ENCODE measurements at regions of chr20 and their contacts with region 1.

Region 1: GRCh38 chr20:49278036-49278817 is at the start of gene ZNFX1:
- DNase-seq: peak; percentile 94 to 99 (median 97)
- ATAC-seq: peak; percentile 92
- H3K4me3 ChIP-seq: peak within 1 kb of the TSS; percentile 80
- H3K4me3 Mint-ChIP-seq: peak within 1 kb of the TSS; percentile 91 to 100 (median 97)
- H3K27ac ChIP-seq: peak within 1 kb of the TSS; percentile 95
- H3K27ac Mint-ChIP-seq: peak within 1 kb of the TSS; percentile 90 to 99 (median 97)
- H3K4me1 ChIP-seq: peaks cover 37 to 61% of the 10 kb centered on the region in 2 donors
- H3K4me1 Mint-ChIP-seq: peaks cover 52 to 80% (median 67%) of the 10 kb centered on the region in 7 donors
- H3K27me3 ChIP-seq: no peaks in the 10 kb centered on the region
- H3K27me3 Mint-ChIP-seq: peaks cover 0 to 4% (median 0%) of the 10 kb centered on the region in 5 donors
- total RNA-seq, gene ZNFX1: 45.0 to 83.7 (median 62.2) TPM

Region 2: DNA sequence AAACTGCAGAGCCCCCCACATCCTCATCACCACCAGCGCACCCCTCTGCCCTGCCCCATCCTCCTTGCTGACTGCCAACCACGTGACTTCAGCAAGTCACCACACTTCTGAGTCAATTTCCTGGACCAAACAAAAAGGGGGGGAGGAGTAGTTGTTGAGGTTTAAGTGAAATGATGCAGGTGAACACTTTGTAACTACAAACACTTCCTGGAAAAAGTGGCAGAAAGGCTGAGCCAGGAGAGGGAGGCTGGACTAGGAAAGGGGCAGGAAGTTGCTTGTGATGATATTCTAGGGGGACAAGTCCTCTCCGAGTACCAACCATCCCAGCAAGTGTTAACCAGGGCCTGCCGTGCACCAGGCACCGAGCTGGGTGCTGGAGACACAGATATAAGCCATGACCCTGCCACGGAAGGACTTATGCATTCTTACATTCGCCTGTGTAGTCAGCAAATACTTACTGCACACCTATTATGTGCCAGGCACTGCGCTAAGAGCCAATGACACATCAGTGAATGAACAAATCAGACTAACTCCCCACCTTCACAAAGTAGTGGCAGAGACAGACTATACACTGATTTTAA is 517.7 kb before region 1 on chr20:
- CTCF ChIA-PET with region 1: no interaction called
- POLR2A ChIA-PET with region 1: no interaction called
- intact Hi-C with region 1: loop called in 1 of 2 experiments (anchors 10 kb)
- DNase-seq: peak in 8 of 9 donors; percentile 21 to 74 (median 62)
- ATAC-seq: peak; percentile 85
- H3K4me3 ChIP-seq: peak overlapping the region; percentile 48
- H3K4me3 Mint-ChIP-seq: peak overlapping the region in 9 of 10 donors; percentile 54 to 81 (median 70)
- H3K27ac ChIP-seq: peak overlapping the region; percentile 57
- H3K27ac Mint-ChIP-seq: peak overlapping the region; percentile 85 to 95 (median 93)
- H3K4me1 ChIP-seq: peaks cover 45 to 72% of the 10 kb centered on the region in 2 donors
- H3K4me1 Mint-ChIP-seq: peaks cover 38 to 86% (median 58%) of the 10 kb centered on the region in 7 donors
- H3K27me3 ChIP-seq: no peaks in the 10 kb centered on the region
- H3K27me3 Mint-ChIP-seq: no peaks in the 10 kb centered on the region

Region 3: DNA sequence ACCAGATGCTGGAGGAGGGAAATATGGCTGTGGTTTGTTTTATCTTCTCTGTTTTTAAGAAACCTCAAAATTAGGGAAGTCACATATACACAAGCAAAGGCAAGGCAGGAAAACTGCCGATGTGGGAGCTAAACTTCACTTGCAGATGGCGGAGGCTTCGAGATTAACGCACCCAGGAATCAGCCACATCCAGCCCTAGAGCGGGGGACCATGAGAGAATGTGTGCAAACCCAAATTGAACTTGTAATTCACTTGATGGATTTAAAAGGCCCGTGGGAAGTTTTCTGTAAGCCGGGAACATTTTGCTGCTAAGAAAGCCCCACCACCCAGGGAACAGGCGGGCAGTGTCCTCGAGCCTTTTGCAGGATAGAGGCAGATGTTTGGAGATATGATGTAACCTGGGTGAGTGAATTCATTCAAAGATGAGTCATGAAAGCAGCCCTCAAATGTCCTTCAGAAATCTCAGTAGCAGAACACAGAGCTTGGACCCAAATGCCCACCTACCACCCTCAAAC is 490.3 kb before region 1 on chr20:
- CTCF ChIA-PET with region 1: no interaction called
- POLR2A ChIA-PET with region 1: no interaction called
- intact Hi-C with region 1: no loop called
- DNase-seq: no peak
- ATAC-seq: peak; percentile 55
- H3K4me3 ChIP-seq: no peak overlapping the region
- H3K4me3 Mint-ChIP-seq: peak overlapping the region in 1 of 10 donors; percentile 16
- H3K27ac ChIP-seq: no peak overlapping the region
- H3K27ac Mint-ChIP-seq: peak overlapping the region in 4 of 9 donors; percentile 20 to 75 (median 38)
- H3K4me1 ChIP-seq: peaks cover 16 to 65% of the 10 kb centered on the region in 2 donors
- H3K4me1 Mint-ChIP-seq: peaks cover 16 to 64% (median 41%) of the 10 kb centered on the region in 7 donors
- H3K27me3 ChIP-seq: no peaks in the 10 kb centered on the region
- H3K27me3 Mint-ChIP-seq: no peaks in the 10 kb centered on the region

Region 4: DNA sequence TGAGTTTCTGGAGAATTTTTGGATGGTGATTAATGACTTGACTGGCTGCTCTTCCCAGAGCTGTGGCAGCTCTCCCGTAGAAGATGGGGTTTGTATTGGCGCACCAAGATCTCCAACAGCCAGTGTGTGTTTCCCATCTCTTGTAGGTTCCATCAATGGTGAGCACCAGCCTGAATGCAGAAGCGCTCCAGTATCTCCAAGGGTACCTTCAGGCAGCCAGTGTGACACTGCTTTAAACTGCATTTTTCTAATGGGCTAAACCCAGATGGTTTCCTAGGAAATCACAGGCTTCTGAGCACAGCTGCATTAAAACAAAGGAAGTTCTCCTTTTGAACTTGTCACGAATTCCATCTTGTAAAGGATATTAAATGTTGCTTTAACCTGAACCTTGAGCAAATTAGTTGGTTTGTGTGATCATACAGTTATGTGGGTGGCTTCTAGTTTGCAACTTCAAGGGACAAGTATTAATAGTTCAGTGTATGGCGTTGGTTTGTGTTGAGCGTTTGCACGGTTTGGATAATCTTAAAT is 182.0 kb before region 1 on chr20:
- CTCF ChIA-PET with region 1: no interaction called
- POLR2A ChIA-PET with region 1: no interaction called
- intact Hi-C with region 1: no loop called
- DNase-seq: no peak
- ATAC-seq: no peak
- H3K4me3 ChIP-seq: no peak overlapping the region
- H3K4me3 Mint-ChIP-seq: no peak overlapping the region
- H3K27ac ChIP-seq: no peak overlapping the region
- H3K27ac Mint-ChIP-seq: peak overlapping the region in 2 of 9 donors; percentile 13 to 37
- H3K4me1 ChIP-seq: no peaks in the 10 kb centered on the region
- H3K4me1 Mint-ChIP-seq: peaks cover 0 to 14% (median 8%) of the 10 kb centered on the region in 7 donors
- H3K27me3 ChIP-seq: no peaks in the 10 kb centered on the region
- H3K27me3 Mint-ChIP-seq: no peaks in the 10 kb centered on the region

Region 5: GRCh38 chr20:49186535-49187329 is 91.5 kb before region 1 on chr20:
- CTCF ChIA-PET with region 1: no interaction called
- POLR2A ChIA-PET with region 1: interaction called, 6 read pairs
- intact Hi-C with region 1: loop called (anchors 1 kb)
- DNase-seq: peak; percentile 17 to 85 (median 73)
- ATAC-seq: peak; percentile 33
- H3K4me3 ChIP-seq: peak overlapping the region; percentile 88
- H3K4me3 Mint-ChIP-seq: peak overlapping the region; percentile 88 to 100 (median 94)
- H3K27ac ChIP-seq: peak overlapping the region; percentile 97
- H3K27ac Mint-ChIP-seq: peak overlapping the region; percentile 70 to 96 (median 93)
- H3K4me1 ChIP-seq: peaks cover 18% of the 10 kb centered on the region in 2 donors
- H3K4me1 Mint-ChIP-seq: peaks cover 38 to 56% (median 50%) of the 10 kb centered on the region in 7 donors
- H3K27me3 ChIP-seq: no peaks in the 10 kb centered on the region
- H3K27me3 Mint-ChIP-seq: peaks cover 0 to 7% (median 0%) of the 10 kb centered on the region in 5 donors

Region 6: GRCh38 chr20:49323622-49324238 is 45.5 kb after region 1 on chr20:
- CTCF ChIA-PET with region 1: no interaction called
- POLR2A ChIA-PET with region 1: interaction called, 3 read pairs
- intact Hi-C with region 1: loop called (anchors 2 kb)
- DNase-seq: peak in 8 of 9 donors; percentile 22 to 51 (median 34)
- ATAC-seq: peak; percentile 88
- H3K4me3 ChIP-seq: no peak overlapping the region
- H3K4me3 Mint-ChIP-seq: peak overlapping the region in 2 of 10 donors; percentile 32 to 47
- H3K27ac ChIP-seq: no peak overlapping the region
- H3K27ac Mint-ChIP-seq: peak overlapping the region in 1 of 9 donors; percentile 59
- H3K4me1 ChIP-seq: peaks cover 5 to 12% of the 10 kb centered on the region in 2 donors
- H3K4me1 Mint-ChIP-seq: peaks cover 7 to 29% (median 26%) of the 10 kb centered on the region in 7 donors
- H3K27me3 ChIP-seq: peaks cover 7 to 21% of the 10 kb centered on the region in 2 donors
- H3K27me3 Mint-ChIP-seq: peaks cover 23 to 62% (median 37%) of the 10 kb centered on the region in 5 donors

Region 7: GRCh38 chr20:49397525-49397924 is 119.3 kb after region 1 on chr20:
- CTCF ChIA-PET with region 1: no interaction called
- POLR2A ChIA-PET with region 1: no interaction called
- intact Hi-C with region 1: no loop called
- DNase-seq: no peak
- ATAC-seq: no peak
- H3K4me3 ChIP-seq: no peak overlapping the region
- H3K4me3 Mint-ChIP-seq: no peak overlapping the region
- H3K27ac ChIP-seq: no peak overlapping the region
- H3K27ac Mint-ChIP-seq: no peak overlapping the region
- H3K4me1 ChIP-seq: no peaks in the 10 kb centered on the region
- H3K4me1 Mint-ChIP-seq: peaks cover 0 to 2% (median 0%) of the 10 kb centered on the region in 7 donors
- H3K27me3 ChIP-seq: no peaks in the 10 kb centered on the region
- H3K27me3 Mint-ChIP-seq: peaks cover 7 to 21% (median 11%) of the 10 kb centered on the region in 5 donors

Region 8: GRCh38 chr20:49915378-49916145 is 637.3 kb after region 1 on chr20 and contains the start of gene SPATA2:
- CTCF ChIA-PET with region 1: no interaction called
- POLR2A ChIA-PET with region 1: no interaction called
- intact Hi-C with region 1: loop called (anchors 1 to 2 kb)
- DNase-seq: peak; percentile 87 to 99 (median 93)
- ATAC-seq: peak; percentile 88
- H3K4me3 ChIP-seq: peak within 1 kb of the TSS; percentile 93
- H3K4me3 Mint-ChIP-seq: peak within 1 kb of the TSS; percentile 96 to 99 (median 97)
- H3K27ac ChIP-seq: peak within 1 kb of the TSS; percentile 100
- H3K27ac Mint-ChIP-seq: peak within 1 kb of the TSS; percentile 97 to 100 (median 99)
- H3K4me1 ChIP-seq: peaks cover 11 to 16% of the 10 kb centered on the region in 2 donors
- H3K4me1 Mint-ChIP-seq: peaks cover 25 to 48% (median 36%) of the 10 kb centered on the region in 7 donors
- H3K27me3 ChIP-seq: no peaks in the 10 kb centered on the region
- H3K27me3 Mint-ChIP-seq: no peaks in the 10 kb centered on the region
- total RNA-seq, gene SPATA2: 9.0 to 18.4 (median 10.0) TPM

Measured in naive thymus-derived CD4-positive, alpha-beta T cell (primary cell).